Thyroid gland (tissue), 4 donors: ENCODE measurements at regions of chr12 and their contacts with region 1.

Region 1: DNA sequence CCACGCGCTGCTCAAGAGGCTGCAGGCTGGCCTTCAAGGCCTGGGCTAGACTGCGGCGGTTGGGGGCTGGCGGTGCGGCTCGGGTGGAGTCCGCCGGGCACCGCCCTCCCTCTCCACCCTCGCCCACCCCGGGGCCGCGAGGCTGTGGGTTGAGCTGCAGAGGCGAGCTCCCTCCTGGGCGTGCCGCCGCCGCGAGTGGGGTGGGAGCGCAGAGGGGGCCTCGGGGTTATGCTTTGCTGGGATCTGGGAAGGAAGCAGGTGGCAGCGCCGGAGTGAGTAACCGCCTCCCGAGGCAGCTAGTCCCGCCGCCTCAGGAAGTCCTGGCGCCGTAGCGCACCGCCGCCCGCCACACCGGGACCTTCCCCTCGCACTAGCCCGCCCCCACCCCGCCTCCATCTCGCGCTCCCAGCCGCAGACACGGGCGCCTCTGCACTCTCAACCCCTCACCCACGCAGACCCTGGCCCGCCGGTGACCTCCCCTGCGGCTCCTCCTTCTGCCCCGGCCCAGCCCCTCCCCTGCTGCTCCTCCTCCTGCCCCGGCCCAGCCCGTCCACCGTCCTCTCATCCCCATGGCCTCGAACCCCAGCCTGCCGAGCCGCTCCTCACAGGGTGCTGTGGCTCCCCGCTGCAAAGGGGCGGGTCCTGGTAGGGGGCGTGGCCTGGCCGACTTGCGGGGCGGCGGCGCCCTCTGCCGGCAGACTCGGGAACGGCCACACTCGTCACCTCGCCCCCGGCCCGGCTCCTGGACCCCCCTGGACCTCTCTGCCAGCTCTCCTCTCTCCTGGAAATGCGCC is 16.6 kb downstream of the TAMALIN start:
- DNase-seq: peak; percentile 86 to 88
- H3K4me3 ChIP-seq: peak overlapping the region in 1 of 3 donors; percentile 46
- H3K27ac ChIP-seq: no peak overlapping the region
- H3K4me1 ChIP-seq: peaks cover 11 to 25% of the 10 kb centered on the region in 2 donors
- H3K27me3 ChIP-seq: no peaks in the 10 kb centered on the region
- CTCF ChIP-seq: peak; percentile 81 to 99 (median 95)
- POLR2A ChIP-seq: no peak

Region 2: GRCh38 chr12:52082988-52083637 is 59.7 kb after region 1 on chr12:
- intact Hi-C with region 1: loop called (anchors 2 kb)
- DNase-seq: peak; percentile 48 to 57
- H3K4me3 ChIP-seq: no peak overlapping the region
- H3K27ac ChIP-seq: peak overlapping the region in 2 of 3 donors; percentile 51 to 56
- H3K4me1 ChIP-seq: peaks cover 8 to 24% of the 10 kb centered on the region in 2 donors
- H3K27me3 ChIP-seq: no peaks in the 10 kb centered on the region
- CTCF ChIP-seq: peak; percentile 86 to 96 (median 92)
- POLR2A ChIP-seq: no peak

Region 3: GRCh38 chr12:52121824-52122539 is 98.6 kb after region 1 on chr12:
- intact Hi-C with region 1: loop called (anchors 10 kb)
- DNase-seq: peak; percentile 64 to 78
- H3K4me3 ChIP-seq: no peak overlapping the region
- H3K27ac ChIP-seq: no peak overlapping the region
- H3K4me1 ChIP-seq: peaks cover 35 to 38% of the 10 kb centered on the region in 2 donors
- H3K27me3 ChIP-seq: no peaks in the 10 kb centered on the region
- CTCF ChIP-seq: peak; percentile 47 to 86 (median 56)
- POLR2A ChIP-seq: no peak